AG04449 (cell line): ENCODE measurements at regions of chr14 and their contacts with region 1.

Region 1: DNA sequence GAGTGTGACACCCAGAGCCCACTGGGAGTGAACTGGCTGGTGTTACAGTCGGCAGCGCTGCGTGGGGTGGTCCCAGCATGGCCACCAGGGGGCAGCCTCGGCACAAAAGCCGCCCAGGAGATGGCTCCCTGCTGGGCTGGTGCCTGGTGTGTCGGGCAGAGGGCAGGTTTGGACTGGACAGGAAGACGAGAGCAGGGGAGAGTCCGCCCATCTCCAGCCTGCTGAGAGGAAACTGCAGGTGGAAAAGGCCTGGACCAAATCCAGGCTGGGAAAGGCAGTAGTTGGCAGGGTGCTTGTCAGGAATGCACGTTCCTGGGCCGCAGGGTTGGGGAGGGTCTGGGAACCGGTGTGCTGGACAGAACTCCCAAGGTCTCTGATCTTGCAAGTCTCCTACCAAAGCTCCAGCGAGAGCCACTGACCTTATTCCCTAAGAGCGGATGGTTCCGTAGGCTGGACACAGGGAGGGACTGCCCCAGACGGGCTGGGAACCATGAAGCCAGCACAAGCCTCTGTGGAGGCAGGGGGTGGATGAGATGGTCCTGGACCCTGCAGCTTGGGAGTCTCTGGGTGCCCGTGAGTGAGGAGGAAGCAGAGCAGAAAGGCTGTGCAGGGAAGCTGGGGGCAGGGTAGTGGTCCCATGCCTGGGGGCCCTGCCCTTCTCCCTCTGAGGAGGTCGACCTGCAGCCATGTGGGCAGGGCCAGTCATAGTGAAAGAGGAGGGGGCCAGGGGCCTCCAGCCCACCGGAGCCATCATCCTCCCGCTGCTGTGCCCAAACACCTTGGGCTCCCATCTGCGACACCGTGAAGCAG is 1.8 kb downstream of the AHNAK2 start:
- DNase-seq: no peak
- H3K4me3 ChIP-seq: no peak overlapping the region
- CTCF ChIP-seq: peak; percentile 99

Region 2: GRCh38 chr14:104723648-104724406 is 252.6 kb before region 1 on chr14 and contains the start of gene ADSS1:
- CTCF ChIA-PET with region 1: no interaction called
- POLR2A ChIA-PET with region 1: no interaction called
- DNase-seq: no peak
- H3K4me3 ChIP-seq: peak within 1 kb of the TSS; percentile 58
- CTCF ChIP-seq: peak; percentile 82

Region 3: DNA sequence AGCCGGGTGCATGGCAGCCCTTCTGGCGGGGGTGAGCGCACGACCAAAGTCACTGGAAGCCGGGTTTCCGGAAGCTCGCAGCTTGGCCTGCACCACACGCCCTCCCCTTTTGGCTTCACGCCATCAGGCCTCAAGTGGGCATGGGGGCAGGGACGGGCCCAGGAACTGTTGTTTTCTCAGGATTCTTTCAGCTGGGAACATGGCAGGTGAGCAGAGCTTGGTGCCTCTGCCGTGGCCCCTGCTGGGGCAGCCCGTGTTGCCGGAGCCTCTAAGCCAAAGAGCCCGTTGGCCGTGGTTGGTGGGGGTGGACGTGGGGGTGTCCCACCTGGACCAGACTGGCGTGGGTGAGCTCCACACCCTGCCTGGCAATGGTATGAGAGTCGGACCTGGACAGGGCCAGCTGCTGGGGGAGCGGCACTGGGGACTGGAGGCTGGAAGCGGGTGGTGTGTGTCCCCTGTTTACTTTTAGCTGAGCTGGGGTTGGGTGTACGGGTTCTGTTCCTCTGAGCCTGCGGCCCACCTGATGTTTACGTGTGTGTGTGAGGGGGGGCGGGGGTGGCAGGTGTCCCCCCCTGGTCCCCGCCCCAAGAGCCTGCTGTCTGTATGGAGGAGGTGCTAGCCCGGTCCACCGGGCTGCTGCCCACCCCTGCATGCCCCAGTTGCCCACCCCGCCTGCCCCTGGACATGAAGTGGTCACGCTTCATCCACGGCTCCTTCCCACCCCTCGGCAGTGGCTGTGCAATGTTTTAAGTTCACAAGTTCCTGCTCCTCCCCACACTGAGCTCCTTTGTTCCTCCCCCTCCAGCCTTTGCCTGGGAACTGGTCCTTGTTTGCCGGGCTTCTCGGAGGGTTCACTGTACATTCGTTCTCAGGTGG is 80.4 kb before region 1 on chr14:
- CTCF ChIA-PET with region 1: interaction called, 27 read pairs
- POLR2A ChIA-PET with region 1: no interaction called
- DNase-seq: no peak
- H3K4me3 ChIP-seq: no peak overlapping the region
- CTCF ChIP-seq: no peak

Region 4: GRCh38 chr14:104965561-104966231 is 10.7 kb before region 1 on chr14:
- CTCF ChIA-PET with region 1: interaction called, 38 read pairs
- POLR2A ChIA-PET with region 1: no interaction called
- DNase-seq: no peak
- H3K4me3 ChIP-seq: no peak overlapping the region
- CTCF ChIP-seq: no peak

Region 5: DNA sequence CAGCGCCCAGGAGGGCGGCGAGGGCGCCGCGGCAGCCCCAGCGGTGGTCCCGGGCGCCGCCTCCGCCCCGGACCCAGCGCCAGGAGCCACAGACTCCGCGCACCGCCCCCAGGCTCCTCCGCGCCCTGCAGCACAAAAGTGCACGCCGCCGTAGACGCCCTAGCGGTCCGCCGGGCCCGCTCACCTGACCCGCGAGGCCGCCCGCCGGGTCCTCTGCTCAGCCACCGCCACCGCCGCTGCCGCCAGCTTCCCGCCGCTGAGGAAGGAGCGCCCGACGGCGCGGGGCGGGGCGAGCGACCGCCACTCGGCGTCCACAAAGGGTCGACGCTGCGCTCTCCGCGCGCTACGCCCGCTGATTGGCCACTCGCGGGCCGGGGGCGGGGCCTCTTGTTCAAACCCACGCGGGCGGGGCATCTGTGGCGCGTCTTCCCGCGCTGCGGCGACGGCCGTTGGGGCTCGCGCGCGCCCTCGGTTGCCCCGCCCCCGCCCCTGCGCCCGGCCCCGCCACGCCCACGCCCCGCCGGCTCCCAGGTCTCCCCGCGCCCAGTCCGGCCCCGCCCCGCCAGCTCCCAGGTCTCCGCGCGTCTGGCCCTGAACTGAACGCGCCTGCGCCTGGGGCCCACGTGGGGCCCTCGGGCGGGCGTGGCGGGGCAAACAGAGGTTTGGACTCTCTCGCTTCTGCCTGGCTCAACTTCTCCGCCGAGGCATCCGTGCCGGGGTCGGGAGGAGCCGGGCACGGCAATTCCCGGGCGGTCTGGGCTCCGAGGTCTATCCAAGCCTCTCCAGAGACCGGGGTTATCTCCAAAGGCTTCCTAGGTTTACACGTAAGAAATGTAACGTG is 44.6 kb after region 1 on chr14 and contains the start of gene CDCA4:
- CTCF ChIA-PET with region 1: interaction called, 31 read pairs
- POLR2A ChIA-PET with region 1: interaction called, 10 read pairs
- DNase-seq: no peak
- H3K4me3 ChIP-seq: peak within 1 kb of the TSS; percentile 77
- CTCF ChIP-seq: no peak

Region 6: GRCh38 chr14:105039458-105040205 is 63.2 kb after region 1 on chr14:
- CTCF ChIA-PET with region 1: interaction called, 383 read pairs
- POLR2A ChIA-PET with region 1: no interaction called
- DNase-seq: no peak
- H3K4me3 ChIP-seq: no peak overlapping the region
- CTCF ChIP-seq: no peak

Region 7: DNA sequence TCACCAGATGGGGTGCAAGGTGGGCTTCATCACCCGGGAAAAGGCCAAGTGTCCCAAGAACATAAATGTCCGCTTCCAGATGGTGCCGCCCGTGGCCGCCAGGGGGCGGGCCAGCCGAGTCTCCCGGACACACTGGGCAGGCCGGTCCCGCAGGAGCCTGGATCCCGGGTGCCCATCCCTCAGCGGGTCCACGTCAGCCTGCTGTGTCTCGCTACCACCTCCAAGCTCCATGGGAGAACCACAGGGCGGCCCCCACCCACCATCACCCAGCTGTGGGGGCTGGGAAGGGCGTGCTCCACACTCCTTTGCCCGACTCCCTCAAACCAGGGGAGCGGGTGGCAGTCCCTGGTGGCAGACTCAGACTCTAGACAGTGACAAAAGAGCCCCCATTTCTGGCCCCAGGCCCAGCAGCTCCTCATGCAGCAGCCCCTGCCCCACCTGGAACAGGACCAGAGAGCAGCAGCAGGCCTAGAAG is 226.7 kb after region 1 on chr14:
- CTCF ChIA-PET with region 1: no interaction called
- POLR2A ChIA-PET with region 1: no interaction called
- DNase-seq: no peak
- H3K4me3 ChIP-seq: 0 out of 2 replicates have a peak overlapping the region, but pooled peaks have one; percentile 3
- CTCF ChIP-seq: peak; percentile 96